Left cardiac atrium (tissue), 4 donors: ENCODE measurements at regions of chr19 and their contacts with region 1.

Region 1: DNA sequence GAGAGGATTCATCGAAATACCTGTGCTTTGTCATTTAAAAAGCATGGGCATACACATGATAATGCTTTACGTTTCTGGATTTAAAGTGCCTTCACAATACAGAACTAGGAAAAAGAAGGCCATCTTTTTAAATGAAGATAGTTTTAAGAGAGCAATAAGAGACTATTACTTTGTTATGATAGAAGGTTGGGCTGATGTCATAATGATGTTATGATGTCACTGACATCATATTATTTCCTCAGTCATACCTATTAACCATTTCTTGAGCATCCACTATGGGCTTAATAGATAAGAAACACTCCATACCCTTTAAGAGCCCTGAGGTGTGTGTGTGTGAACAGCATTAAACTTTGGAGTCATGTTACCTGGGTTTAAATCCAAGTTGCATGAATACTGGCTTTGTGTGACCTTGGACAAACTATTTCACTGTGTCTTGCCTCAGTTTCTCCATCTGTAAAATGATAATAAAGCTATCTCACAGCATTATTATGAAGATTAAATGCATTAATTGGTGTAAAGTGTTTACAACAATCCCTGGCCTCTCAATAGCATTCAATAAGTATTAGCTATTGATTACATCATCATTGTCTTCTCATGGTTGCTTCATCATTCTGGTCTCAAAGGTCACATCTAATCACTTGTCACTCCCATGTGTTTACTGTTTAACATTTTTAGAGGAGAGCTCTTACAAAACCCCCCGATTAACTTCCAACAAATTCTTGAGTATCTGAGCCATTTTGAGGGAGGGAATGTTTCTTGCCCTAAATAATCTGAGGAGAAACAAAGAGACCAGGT is 11.1 kb downstream of the ZNF181 start:
- DNase-seq: no peak
- ATAC-seq: no peak

Region 2: GRCh38 chr19:34540811-34541557 is 204.1 kb before region 1 on chr19:
- intact Hi-C with region 1: loop called in 1 of 2 experiments (anchors 2 kb)
- DNase-seq: no peak
- ATAC-seq: no peak

Region 3: DNA sequence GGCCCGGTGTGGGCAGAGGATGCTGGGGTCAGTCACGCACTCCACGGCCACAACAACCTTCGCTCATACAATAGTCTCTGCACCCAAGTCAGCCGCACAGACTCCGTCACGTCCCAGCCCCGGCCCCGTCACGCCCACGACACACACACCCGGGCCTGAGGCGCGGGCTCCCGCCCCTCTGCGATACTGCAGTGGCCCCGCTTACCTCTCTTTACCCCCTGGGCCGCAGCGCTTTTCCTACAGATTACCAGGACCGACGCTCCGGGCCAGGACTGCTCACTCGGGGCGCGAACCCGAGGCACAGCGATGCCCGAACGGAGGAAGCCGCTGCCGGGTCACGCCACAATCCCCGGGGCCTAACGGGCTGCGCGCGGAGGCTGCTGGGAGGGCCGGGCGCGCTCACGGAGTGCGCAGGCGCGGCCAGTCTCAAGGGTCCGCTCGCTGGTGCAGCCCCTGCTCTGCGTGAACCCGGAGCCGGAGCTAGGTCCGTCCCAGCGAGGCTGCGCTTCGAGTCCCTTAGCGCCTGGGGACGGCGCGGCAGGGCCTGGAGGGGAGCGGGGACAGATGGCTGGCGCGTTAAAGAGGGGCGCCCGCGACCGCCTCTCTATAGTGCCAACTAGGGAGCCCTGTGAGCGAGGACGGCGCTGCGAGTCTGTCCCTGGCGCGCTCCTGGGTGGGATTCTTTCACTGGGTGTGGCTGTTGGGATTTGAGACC is 1673.4 kb after region 1 on chr19 and contains the start of gene ZFP82:
- intact Hi-C with region 1: no loop called
- DNase-seq: peak; percentile 88
- ATAC-seq: peak; percentile 98
- total RNA-seq, gene ZFP82: 3.8 to 4.7 TPM